Activated T-helper 2 cell treated with anti-CD3 and anti-CD28 coated beads, Interferon-gamma antibody, Interleukin-2, Interleukin-4, amounts not matched to agents 10 μg/mL and 5 μg/mL and 100 μg/mL, durations not matched to agents 14 hours and 24 hours and 36 hours (primary cell): ENCODE measurements at regions of chr3 and their contacts with region 1.

Region 1: DNA sequence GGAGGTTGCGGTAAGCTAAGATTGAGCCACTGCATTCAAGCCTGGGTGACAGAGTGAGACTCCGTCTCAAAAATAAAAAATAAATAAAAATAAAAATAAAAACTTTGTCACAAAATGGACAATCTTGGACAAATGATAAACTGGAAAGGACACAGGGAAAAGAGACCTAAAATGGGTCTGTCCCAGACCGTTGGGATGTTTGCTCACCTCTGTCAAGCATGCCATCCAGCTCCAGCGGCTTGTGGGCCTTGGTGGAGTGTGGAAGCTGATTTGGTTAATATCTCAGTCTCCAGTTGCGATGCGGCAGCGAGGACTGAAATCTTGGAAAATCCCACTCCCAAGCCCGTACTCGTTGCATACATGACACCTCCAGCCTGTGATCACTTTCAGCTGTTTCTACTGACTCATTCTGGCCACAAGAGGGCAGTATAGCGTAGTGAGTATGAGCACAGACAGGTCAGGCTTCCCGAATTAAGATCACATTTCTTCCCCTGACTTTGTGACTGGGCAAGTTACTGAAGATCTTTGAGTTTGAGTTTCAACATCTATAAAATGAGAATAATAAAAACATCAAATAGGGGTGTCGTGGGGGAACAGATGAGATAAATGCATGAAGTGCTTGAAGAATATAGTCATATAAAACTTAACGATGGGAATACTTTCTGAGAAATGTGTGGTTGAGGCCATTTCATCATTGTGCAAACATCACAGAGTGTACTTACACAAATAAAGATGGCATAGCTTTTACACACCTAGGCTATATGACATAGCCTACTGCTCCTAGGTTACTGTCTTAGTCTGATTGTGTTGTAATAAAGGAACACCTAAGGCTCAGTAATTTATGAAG is 19.6 kb upstream of the MOBP start:
- DNase-seq: peak; percentile 40
- H3K4me3 Mint-ChIP-seq: no peak overlapping the region
- H3K27ac Mint-ChIP-seq: no peak overlapping the region
- H3K4me1 Mint-ChIP-seq: peaks cover 2% of the 10 kb centered on the region
- H3K27me3 Mint-ChIP-seq: peaks cover 14% of the 10 kb centered on the region

Region 2: GRCh38 chr3:39499651-39500240 is 51.9 kb after region 1 on chr3:
- intact Hi-C with region 1: loop called (anchors 2 kb)
- DNase-seq: no peak
- H3K4me3 Mint-ChIP-seq: no peak overlapping the region
- H3K27ac Mint-ChIP-seq: no peak overlapping the region
- H3K4me1 Mint-ChIP-seq: peaks cover 4% of the 10 kb centered on the region
- H3K27me3 Mint-ChIP-seq: peaks cover 38% of the 10 kb centered on the region

Region 3: GRCh38 chr3:39990532-39990931 is 542.7 kb after region 1 on chr3:
- intact Hi-C with region 1: loop called (anchors 10 kb)
- DNase-seq: no peak
- H3K4me3 Mint-ChIP-seq: no peak overlapping the region
- H3K27ac Mint-ChIP-seq: no peak overlapping the region
- H3K4me1 Mint-ChIP-seq: no peaks in the 10 kb centered on the region
- H3K27me3 Mint-ChIP-seq: no peaks in the 10 kb centered on the region